ENCODE measurements at regions of chr15 and their contacts with region 1.

Region 1: GRCh38 chr15:88638626-88639372 is at the start of gene ISG20:
- DNase-seq: peak; percentile 94
- H3K4me3 Mint-ChIP-seq: peak within 1 kb of the TSS; percentile 86
- H3K27ac Mint-ChIP-seq: peak within 1 kb of the TSS; percentile 96
- H3K4me1 Mint-ChIP-seq: peaks cover 72% of the 10 kb centered on the region
- H3K27me3 Mint-ChIP-seq: peaks cover 1% of the 10 kb centered on the region
- total RNA-seq, gene ISG20: 31.2 and 34.9 TPM in 2 replicates

Region 2: DNA sequence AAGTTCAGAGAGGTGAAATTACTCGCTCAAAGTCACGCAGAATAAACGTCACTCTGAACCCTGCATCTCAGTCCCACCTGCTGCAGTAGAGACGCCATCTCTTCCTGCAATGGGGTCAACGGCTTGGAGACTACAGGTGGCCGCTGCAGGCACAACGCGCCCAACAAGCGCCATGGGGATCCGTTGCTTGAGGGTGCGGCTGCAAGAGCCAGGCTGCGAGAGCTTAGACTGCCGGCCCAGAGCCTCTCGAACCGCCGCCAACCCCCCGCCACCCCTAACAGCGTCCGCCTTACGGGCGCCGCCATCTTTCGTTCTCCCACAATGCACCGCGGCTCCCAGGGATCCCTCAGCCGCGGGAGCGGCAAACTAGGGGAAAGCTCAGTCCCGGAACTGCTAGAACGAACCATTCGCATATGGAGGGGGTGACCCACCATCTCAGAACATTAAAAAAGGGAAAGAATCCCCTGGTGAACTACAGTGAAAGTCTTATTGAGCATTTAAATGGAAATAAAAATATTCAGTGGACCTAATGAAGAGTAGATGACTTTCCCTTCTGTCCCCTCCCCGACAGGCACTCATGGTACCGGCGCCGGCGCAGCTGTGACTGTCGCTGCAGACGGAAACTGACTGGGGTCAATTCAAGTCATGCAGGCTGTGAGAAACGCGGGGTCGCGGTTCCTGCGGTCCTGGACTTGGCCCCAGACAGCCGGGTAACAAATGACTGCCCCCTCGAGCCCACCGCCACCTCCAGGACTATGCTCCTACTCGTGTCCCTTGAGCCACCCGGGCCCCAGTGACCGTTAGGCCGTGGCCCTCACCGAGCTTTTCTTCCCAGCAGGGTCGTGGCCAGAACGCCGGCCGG is 171.5 kb before region 1 on chr15 and contains the starts of genes MRPL46 and MRPS11:
- intact Hi-C with region 1: loop called (anchors 1 kb)
- DNase-seq: peak; percentile 86
- H3K4me3 Mint-ChIP-seq: peak within 1 kb of the TSS; percentile 96
- H3K27ac Mint-ChIP-seq: peak within 1 kb of the TSS; percentile 95
- H3K4me1 Mint-ChIP-seq: peaks cover 37% of the 10 kb centered on the region
- H3K27me3 Mint-ChIP-seq: no peaks in the 10 kb centered on the region
- total RNA-seq, gene MRPL46: 47.5 and 49.1 TPM in 2 replicates
- total RNA-seq, gene MRPS11: 68.3 and 78.0 TPM in 2 replicates

Measured in activated T-helper 1 cell treated with anti-CD3 and anti-CD28 coated beads, Interleukin-12 subunit alpha, Interleukin-12 subunit beta, Interleukin-2, Interleukin-4 antibody, amounts not matched to agents 30 ng/mL and 10 ng/mL and 1 ng/mL, durations not matched to agents 14 hours and 24 hours and 36 hours (primary cell).